Activated T-helper 1 cell treated with anti-CD3 and anti-CD28 coated beads, Interleukin-12 subunit alpha, Interleukin-12 subunit beta, Interleukin-2, Interleukin-4 antibody, amounts not matched to agents 30 ng/mL and 10 ng/mL and 1 ng/mL, durations not matched to agents 14 hours and 24 hours and 36 hours (primary cell): ENCODE measurements at regions of chr7 and their contacts with region 1.

Region 1: DNA sequence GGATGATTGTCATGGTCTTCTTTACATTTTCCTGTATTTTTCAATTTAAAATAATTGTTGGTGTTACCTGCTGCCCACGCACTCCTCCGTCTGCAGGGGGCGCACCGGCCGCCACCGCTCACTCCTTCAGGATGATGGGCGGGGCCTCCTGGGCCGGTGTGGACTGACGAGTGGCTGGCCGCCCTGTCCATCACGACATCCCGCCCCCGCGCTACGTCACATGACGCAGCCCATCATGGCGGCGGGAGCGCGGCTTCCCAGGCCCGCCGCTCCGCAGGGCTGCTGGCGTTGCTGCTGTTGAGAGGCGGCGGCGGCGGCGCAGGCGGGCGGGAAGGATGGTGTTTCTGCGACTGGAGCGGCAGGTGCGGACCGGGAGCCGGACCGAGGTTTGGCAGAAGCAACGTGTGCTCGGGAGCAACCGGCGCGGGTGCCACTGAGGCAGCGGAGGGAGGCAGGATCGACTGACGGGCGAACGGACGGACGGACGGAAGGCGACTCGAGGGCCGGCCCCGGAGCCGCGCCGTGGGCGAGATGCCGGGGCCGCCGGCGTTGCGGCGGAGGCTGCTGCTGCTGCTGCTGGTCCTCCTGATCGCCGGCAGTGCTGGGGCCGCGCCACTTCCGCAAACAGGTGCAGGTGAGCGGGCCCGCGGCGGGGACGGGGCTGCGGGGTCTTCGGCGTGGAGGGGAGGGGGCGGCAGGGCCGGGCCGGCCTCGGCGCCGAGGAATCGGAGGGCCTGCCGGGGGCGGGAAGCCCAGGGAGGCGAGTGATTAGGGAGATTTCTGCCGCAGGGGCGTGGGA is at the start of gene LMTK2:
- DNase-seq: peak; percentile 94
- H3K4me3 Mint-ChIP-seq: peak within 1 kb of the TSS; percentile 96
- H3K27ac Mint-ChIP-seq: peak within 1 kb of the TSS; percentile 88
- H3K4me1 Mint-ChIP-seq: peaks cover 27% of the 10 kb centered on the region
- H3K27me3 Mint-ChIP-seq: no peaks in the 10 kb centered on the region
- total RNA-seq, gene LMTK2: 14.9 and 17.7 TPM in 2 replicates

Region 2: GRCh38 chr7:97872025-97872669 is 234.7 kb before region 1 on chr7 and contains the start of gene ASNS:
- intact Hi-C with region 1: loop called (anchors 1 kb)
- DNase-seq: peak; percentile 86
- H3K4me3 Mint-ChIP-seq: peak within 1 kb of the TSS; percentile 90
- H3K27ac Mint-ChIP-seq: peak within 1 kb of the TSS; percentile 86
- H3K4me1 Mint-ChIP-seq: peaks cover 20% of the 10 kb centered on the region
- H3K27me3 Mint-ChIP-seq: no peaks in the 10 kb centered on the region
- total RNA-seq, gene ASNS: 71.1 and 79.6 TPM in 2 replicates

Region 3: GRCh38 chr7:98021588-98022351 is 85.1 kb before region 1 on chr7:
- intact Hi-C with region 1: loop called (anchors 1 kb)
- DNase-seq: peak; percentile 65
- H3K4me3 Mint-ChIP-seq: no peak overlapping the region
- H3K27ac Mint-ChIP-seq: no peak overlapping the region
- H3K4me1 Mint-ChIP-seq: peaks cover 6% of the 10 kb centered on the region
- H3K27me3 Mint-ChIP-seq: no peaks in the 10 kb centered on the region

Region 4: DNA sequence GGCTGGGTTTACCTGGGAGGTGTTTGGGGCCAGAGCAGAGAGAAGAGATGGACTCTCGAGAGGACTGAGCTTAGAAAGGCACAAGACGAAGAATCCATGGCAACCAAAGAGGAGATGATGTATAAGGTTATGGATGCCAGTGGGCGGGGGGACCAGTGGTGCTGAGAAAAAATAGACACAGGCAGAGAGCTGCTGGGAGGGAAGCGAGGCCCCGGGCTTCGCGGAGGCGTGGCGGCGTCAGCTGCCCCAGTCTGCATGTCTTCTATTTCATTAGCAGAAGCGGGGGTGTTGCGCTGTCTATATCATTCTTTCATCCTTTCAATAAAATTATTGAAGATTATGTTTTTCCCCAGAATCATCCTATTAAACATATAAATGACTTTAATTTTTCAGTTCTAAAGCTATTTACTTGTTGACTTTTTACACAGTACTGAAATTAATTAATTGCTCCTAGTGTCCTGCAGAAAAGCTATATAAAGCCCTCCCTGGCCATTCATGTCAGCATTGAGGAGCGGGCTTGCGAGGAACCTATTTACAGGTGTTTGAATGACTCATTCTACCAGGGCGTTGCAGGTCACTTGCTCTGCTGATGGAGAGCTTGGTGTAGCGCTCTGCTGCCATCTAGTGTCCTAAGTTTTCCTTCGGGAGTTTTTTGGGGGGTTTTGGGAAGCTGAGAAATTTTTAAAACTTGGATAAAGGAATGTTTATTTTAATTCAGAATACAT is 61.5 kb after region 1 on chr7:
- intact Hi-C with region 1: loop called (anchors 1 kb)
- DNase-seq: peak; percentile 49
- H3K4me3 Mint-ChIP-seq: no peak overlapping the region
- H3K27ac Mint-ChIP-seq: no peak overlapping the region
- H3K4me1 Mint-ChIP-seq: no peaks in the 10 kb centered on the region
- H3K27me3 Mint-ChIP-seq: no peaks in the 10 kb centered on the region

Region 5: GRCh38 chr7:98280791-98281756 is 174.2 kb after region 1 on chr7 and contains the start of gene BRI3:
- intact Hi-C with region 1: loop called (anchors 2 kb)
- DNase-seq: peak; percentile 75
- H3K4me3 Mint-ChIP-seq: peak within 1 kb of the TSS; percentile 88
- H3K27ac Mint-ChIP-seq: peak within 1 kb of the TSS; percentile 83
- H3K4me1 Mint-ChIP-seq: peaks cover 16% of the 10 kb centered on the region
- H3K27me3 Mint-ChIP-seq: no peaks in the 10 kb centered on the region
- total RNA-seq, gene BRI3: 67.1 and 68.3 TPM in 2 replicates